Upper lobe of right lung (tissue), 1 donor: ENCODE measurements at regions of chr12 and their contacts with region 1.

Region 1: DNA sequence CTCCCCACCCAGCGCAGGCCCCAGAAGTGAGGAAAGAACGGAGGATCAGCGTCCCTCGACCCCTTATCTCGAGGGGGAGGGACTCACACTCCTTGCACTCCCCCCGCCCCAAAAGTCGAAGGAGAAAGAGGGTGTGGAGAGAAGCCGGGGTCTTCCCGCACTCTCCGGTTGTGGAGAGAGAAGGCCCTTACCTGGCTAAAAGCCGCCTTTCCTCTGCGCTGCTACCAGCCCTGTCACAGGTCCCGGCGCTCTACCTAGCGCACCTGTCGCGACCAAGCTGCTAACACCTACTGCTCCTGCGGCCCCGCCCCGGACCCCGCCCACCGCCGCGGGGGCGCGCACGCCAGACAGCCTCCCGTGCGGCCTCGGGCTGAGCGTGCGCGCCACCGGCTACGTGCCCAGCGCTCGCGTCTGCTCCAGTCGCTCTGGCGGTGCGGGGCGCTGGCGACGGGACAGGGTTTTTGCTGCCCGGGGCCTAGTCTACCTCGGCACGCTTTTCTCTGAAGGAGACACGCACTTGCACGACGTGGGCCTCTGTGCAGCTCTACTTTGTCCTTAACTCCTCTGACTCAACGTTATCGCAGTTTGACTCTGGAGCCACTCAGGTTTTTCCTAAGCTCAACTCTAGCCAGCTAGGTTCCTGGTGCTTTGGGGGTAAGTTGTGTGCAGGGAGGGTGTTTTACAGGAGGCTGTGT is at the start of gene LIMA1:
- DNase-seq: peak; percentile 97
- ATAC-seq: peak; percentile 100
- H3K4me3 ChIP-seq: peak within 1 kb of the TSS; percentile 94
- H3K27ac ChIP-seq: peak within 1 kb of the TSS; percentile 85
- H3K4me1 ChIP-seq: peaks cover 28% of the 10 kb centered on the region
- H3K27me3 ChIP-seq: no peaks in the 10 kb centered on the region
- CTCF ChIP-seq: peak; percentile 33
- total RNA-seq, gene LIMA1: 81.1 TPM

Region 2: GRCh38 chr12:50211392-50212070 is 71.8 kb before region 1 on chr12:
- intact Hi-C with region 1: loop called (anchors 10 kb)
- DNase-seq: no peak
- ATAC-seq: no peak
- H3K4me3 ChIP-seq: no peak overlapping the region
- H3K27ac ChIP-seq: peak overlapping the region; percentile 32
- H3K4me1 ChIP-seq: peaks cover 11% of the 10 kb centered on the region
- H3K27me3 ChIP-seq: no peaks in the 10 kb centered on the region
- CTCF ChIP-seq: no peak